ENCODE measurements at regions of chr2 and their contacts with region 1.

Region 1: GRCh38 chr2:238513346-238513745 is 86.6 kb downstream of the ASB1 start:
- H3K4me3 Mint-ChIP-seq: no peak overlapping the region
- H3K27ac Mint-ChIP-seq: no peak overlapping the region
- H3K4me1 Mint-ChIP-seq: no peaks in the 10 kb centered on the region
- H3K27me3 Mint-ChIP-seq: peaks cover 6% of the 10 kb centered on the region

Region 2: GRCh38 chr2:237904801-237905599 is 608.3 kb before region 1 on chr2:
- intact Hi-C with region 1: no loop called
- H3K4me3 Mint-ChIP-seq: peak overlapping the region; percentile 42
- H3K27ac Mint-ChIP-seq: peak overlapping the region; percentile 87
- H3K4me1 Mint-ChIP-seq: peaks cover 63% of the 10 kb centered on the region
- H3K27me3 Mint-ChIP-seq: peaks cover 18% of the 10 kb centered on the region

Region 3: DNA sequence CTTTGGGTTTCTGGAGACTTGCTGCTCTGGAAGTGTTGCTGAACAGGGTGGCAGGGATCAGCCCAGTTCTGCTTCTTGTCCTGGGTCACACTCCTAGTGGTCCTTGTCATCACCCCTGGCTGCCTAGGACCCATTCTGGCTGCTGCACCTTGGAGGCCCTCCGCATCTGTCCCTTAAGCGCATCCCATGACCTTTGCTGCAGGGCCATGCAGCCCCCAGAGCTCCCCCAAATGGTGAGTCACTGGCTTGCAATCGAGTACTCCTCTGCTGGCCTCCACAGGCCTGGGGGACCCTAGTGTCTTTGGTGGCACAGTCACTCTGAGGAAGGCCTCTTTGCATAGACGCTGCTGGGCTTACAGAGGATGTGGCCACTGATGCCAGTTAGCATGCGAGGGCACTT is 101.8 kb after region 1 on chr2:
- intact Hi-C with region 1: loop called (anchors 10 kb)
- H3K4me3 Mint-ChIP-seq: no peak overlapping the region
- H3K27ac Mint-ChIP-seq: no peak overlapping the region
- H3K4me1 Mint-ChIP-seq: no peaks in the 10 kb centered on the region
- H3K27me3 Mint-ChIP-seq: peaks cover 1% of the 10 kb centered on the region